ENCODE measurements at regions of chr5 and their contacts with region 1.

Region 1: GRCh38 chr5:75236322-75237316 is at the start of gene ANKRD31:
- DNase-seq: peak; percentile 71
- H3K4me3 ChIP-seq: peak within 1 kb of the TSS; percentile 8 to 57 (median 53)
- H3K27ac ChIP-seq: no peak within 1 kb of the TSS
- H3K4me1 ChIP-seq: peaks cover 3% of the 10 kb centered on the region
- H3K27me3 ChIP-seq: no peaks in the 10 kb centered on the region
- CTCF ChIP-seq: peak; percentile 67 to 86
- POLR2A ChIP-seq: peak; percentile 38
- total RNA-seq, gene ANKRD31: not detected in 2 replicates

Region 2: DNA sequence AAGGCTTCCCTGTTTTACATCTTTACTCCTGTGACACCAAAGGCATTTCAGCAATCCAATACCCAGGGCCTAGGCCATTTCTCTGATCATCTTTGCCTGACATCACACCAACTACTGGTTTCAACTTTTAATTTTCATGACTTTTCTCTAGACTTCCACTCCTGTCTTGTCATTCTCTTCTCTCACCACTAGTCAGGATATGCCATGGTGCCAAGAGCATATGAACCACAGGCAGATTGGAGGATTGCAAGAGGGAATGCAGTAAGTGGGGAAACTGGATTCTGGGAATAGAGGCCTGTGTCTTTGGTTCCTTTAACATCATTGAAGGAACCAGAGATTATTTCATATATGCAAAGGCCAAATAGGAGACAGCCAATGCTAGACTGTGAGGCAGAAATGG is 69.3 kb before region 1 on chr5:
- CTCF ChIA-PET with region 1: no interaction called
- POLR2A ChIA-PET with region 1: no interaction called
- dilution Hi-C with region 1: no loop called
- intact Hi-C with region 1: no loop called
- DNase-seq: no peak
- H3K4me3 ChIP-seq: no peak overlapping the region
- H3K27ac ChIP-seq: no peak overlapping the region
- H3K4me1 ChIP-seq: no peaks in the 10 kb centered on the region
- H3K27me3 ChIP-seq: peaks cover 0 to 3% of the 10 kb centered on the region in 2 experiments
- CTCF ChIP-seq: peak in 1 of 2 donors; percentile 13
- POLR2A ChIP-seq: no peak

Region 3: GRCh38 chr5:75405296-75405695 is 168.7 kb after region 1 on chr5:
- CTCF ChIA-PET with region 1: no interaction called
- POLR2A ChIA-PET with region 1: no interaction called
- dilution Hi-C with region 1: no loop called
- intact Hi-C with region 1: no loop called
- DNase-seq: no peak
- H3K4me3 ChIP-seq: no peak overlapping the region
- H3K27ac ChIP-seq: no peak overlapping the region
- H3K4me1 ChIP-seq: no peaks in the 10 kb centered on the region
- H3K27me3 ChIP-seq: no peaks in the 10 kb centered on the region
- CTCF ChIP-seq: no peak
- POLR2A ChIP-seq: no peak

Region 4: DNA sequence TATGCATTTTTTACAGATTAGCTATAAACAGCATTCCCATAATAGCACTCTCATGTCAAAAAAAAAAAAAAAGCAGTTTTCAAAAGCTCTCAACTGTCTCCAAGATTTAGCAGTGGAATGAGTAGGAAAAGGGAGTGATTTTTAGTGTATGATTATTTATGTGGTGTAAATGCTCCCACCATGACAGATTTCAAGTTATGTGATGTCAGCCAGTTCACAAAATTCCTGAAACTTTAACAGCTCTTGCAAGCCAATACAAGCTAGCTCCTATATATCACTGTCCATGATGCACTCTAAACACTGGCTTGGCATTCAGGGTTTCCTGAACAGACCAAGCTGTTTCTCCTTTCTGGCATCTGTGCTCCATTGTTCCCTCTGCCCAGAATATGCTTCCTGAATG is 366.8 kb after region 1 on chr5:
- CTCF ChIA-PET with region 1: no interaction called
- POLR2A ChIA-PET with region 1: no interaction called
- dilution Hi-C with region 1: no loop called
- intact Hi-C with region 1: loop called (anchors 10 kb)
- DNase-seq: peak; percentile 66
- H3K4me3 ChIP-seq: no peak overlapping the region
- H3K27ac ChIP-seq: no peak overlapping the region
- H3K4me1 ChIP-seq: peaks cover 4% of the 10 kb centered on the region
- H3K27me3 ChIP-seq: no peaks in the 10 kb centered on the region
- CTCF ChIP-seq: no peak
- POLR2A ChIP-seq: no peak

Region 5: DNA sequence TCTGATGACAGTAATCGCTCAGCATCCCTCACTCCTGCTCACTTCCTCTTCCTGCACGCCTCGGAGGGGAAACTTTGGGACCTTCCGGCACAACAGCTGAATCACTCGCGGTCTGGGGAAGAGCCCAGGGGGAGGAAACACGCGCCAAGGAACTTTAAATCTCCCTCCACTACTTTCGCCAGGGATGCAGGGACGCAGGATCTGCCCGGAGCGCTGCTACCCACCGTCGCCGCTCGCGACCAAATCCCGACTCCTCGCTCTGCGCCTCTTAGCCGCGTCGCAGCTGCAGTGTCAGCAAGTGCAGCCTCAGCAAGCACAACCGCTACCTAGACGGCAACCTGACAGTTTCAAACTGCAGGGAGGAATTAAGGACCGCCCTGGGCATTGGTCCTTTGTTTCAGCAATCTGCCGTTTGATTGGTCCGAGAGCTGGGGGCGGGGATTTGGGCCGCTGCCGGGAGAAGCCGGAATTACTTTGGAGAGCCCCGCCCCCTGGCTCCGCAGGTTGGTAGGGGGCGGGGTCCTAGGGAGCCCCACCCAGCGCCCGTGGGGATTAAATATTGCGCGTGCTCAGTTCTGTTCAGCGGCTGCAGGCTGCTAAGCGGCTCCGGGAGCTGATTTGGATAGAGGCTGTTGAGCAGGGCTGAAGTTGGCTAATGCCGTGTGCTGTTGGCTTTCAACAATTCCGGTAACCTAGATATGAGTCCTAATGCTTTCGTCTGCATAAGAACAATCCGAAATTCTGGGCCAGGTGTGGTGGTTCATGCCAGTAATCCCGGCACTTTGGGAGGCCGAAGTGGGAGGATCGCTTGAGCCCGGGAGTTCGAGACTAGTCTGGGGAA is 480.7 kb after region 1 on chr5 and contains the start of gene POC5:
- CTCF ChIA-PET with region 1: no interaction called
- POLR2A ChIA-PET with region 1: no interaction called
- dilution Hi-C with region 1: no loop called
- intact Hi-C with region 1: loop called (anchors 5 kb)
- DNase-seq: peak; percentile 98
- H3K4me3 ChIP-seq: peak within 1 kb of the TSS; percentile 49 to 88 (median 86)
- H3K27ac ChIP-seq: peak within 1 kb of the TSS; percentile 53
- H3K4me1 ChIP-seq: peaks cover 7% of the 10 kb centered on the region
- H3K27me3 ChIP-seq: peaks cover 8 to 9% of the 10 kb centered on the region in 2 experiments
- CTCF ChIP-seq: no peak
- POLR2A ChIP-seq: no peak
- total RNA-seq, gene POC5: 7.8 and 8.3 TPM in 2 replicates

Measured in endothelial cell of umbilical vein (primary cell).